Mammary epithelial cell (primary cell): ENCODE measurements at regions of chr5 and their contacts with region 1.

Region 1: DNA sequence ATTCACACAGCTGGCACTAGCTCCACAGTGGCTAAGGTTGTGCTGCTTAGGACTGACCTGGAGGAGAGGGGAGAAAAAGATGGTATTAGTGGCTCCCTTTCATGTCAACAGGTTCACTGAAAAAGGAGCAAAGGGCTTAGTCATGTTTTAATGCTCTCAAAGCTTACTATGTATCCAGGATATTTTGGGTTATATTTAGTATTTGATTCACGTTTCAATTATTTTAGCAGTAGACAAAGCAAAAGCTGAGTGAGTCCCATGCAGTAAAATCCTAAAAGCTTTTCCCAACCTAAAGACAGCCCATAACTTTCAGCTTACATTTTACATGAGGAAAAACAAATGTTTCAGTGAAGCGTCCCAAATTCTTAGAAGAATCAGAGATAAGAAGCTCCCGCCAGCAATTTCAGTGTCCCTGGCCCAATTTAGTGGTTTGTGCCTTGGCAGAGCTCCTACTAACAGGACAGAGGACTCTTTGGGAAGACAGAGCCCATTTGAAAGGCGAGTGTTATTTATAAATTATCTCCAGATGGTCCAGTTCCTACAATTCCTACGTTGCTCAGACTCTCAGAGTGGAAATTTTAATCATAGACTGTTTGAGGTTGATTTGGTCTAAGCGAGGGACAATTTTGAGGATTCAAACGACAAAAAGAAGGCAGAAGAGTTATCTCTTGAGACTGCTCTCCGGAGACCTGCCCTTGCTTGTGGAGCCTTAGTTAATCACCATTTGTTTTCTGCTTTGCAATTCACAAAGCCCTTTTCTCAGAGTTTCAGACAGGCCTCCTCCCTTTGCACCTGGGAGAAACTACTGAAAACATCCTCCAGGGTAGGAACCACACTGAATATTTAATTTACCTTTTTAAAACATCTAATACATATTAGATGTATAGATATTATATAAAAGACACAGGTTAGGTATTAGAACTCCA is 225.0 kb upstream of the ANKRD55 start:
- DNase-seq: no peak
- H3K4me3 ChIP-seq: no peak overlapping the region
- H3K27ac ChIP-seq: no peak overlapping the region
- H3K4me1 ChIP-seq: no peaks in the 10 kb centered on the region
- H3K27me3 ChIP-seq: no peaks in the 10 kb centered on the region
- CTCF ChIP-seq: no peak

Region 2: GRCh38 chr5:56247592-56247991 is 210.6 kb before region 1 on chr5:
- CTCF ChIA-PET with region 1: no interaction called
- dilution Hi-C with region 1: no loop called
- in situ Hi-C with region 1: no loop called
- intact Hi-C with region 1: no loop called
- DNase-seq: no peak
- H3K4me3 ChIP-seq: no peak overlapping the region
- H3K27ac ChIP-seq: no peak overlapping the region
- H3K4me1 ChIP-seq: no peaks in the 10 kb centered on the region
- H3K27me3 ChIP-seq: no peaks in the 10 kb centered on the region
- CTCF ChIP-seq: no peak

Region 3: GRCh38 chr5:56389261-56389660 is 68.9 kb before region 1 on chr5:
- CTCF ChIA-PET with region 1: no interaction called
- dilution Hi-C with region 1: no loop called
- in situ Hi-C with region 1: no loop called
- intact Hi-C with region 1: no loop called
- DNase-seq: no peak
- H3K4me3 ChIP-seq: no peak overlapping the region
- H3K27ac ChIP-seq: no peak overlapping the region
- H3K4me1 ChIP-seq: no peaks in the 10 kb centered on the region
- H3K27me3 ChIP-seq: no peaks in the 10 kb centered on the region
- CTCF ChIP-seq: no peak

Region 4: GRCh38 chr5:56402266-56403220 is 55.6 kb before region 1 on chr5:
- CTCF ChIA-PET with region 1: no interaction called
- dilution Hi-C with region 1: loop called (anchors 5 kb)
- in situ Hi-C with region 1: no loop called
- intact Hi-C with region 1: no loop called
- DNase-seq: no peak
- H3K4me3 ChIP-seq: no peak overlapping the region
- H3K27ac ChIP-seq: no peak overlapping the region
- H3K4me1 ChIP-seq: no peaks in the 10 kb centered on the region
- H3K27me3 ChIP-seq: no peaks in the 10 kb centered on the region
- CTCF ChIP-seq: no peak

Region 5: DNA sequence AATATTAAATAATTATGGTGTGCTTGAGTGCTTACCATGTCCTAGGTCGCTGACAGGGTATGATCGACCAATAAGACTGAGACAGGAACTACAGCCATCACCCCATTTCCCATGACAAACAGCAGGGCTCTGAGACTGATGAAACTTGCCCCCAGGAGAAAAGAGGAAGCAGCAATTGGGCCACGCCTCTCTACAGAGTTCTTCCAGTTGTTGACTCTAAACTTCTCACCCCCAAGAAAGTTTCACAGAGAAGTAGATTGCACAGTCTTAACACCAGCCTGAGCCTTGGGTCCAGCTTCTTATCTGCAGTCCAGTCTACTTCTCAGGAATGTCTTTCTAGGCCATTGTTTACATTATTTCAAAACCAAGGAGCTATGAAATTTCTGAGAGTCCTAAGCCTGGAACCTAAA is 42.8 kb before region 1 on chr5:
- CTCF ChIA-PET with region 1: no interaction called
- dilution Hi-C with region 1: no loop called
- in situ Hi-C with region 1: no loop called
- intact Hi-C with region 1: no loop called
- DNase-seq: no peak
- H3K4me3 ChIP-seq: no peak overlapping the region
- H3K27ac ChIP-seq: no peak overlapping the region
- H3K4me1 ChIP-seq: peaks cover 5% of the 10 kb centered on the region
- H3K27me3 ChIP-seq: no peaks in the 10 kb centered on the region
- CTCF ChIP-seq: no peak